ENCODE measurements at regions of chr4 and their contacts with region 1.

Region 1: DNA sequence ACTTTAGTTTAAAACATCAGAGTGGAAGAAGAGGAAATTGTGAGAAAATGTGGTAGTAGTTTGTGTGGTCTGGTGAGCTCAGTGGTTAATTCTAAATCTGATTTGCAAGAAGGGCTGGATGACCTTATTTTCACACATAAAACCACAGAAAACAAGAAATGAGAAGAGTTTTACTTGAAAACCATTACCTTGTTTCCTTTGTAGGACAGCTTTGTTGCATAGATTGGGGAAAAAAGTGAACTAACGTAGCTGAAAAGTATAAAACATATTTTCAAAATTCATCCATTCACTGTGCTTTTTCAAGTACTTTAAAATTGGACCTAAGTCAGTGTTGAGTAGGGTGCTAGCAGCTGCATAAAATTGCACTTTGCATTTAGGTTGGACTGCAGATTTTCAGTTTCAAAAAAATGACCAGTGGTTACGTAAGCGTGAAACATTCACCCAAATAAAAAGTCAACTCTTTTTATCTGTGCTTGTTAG is 211.3 kb downstream of the ARHGAP10 start:
- DNase-seq: no peak
- ATAC-seq: no peak
- H3K4me3 ChIP-seq: no peak overlapping the region
- H3K27ac ChIP-seq: no peak overlapping the region
- H3K4me1 ChIP-seq: peaks cover 0 to 34% of the 10 kb centered on the region in 2 donors
- H3K27me3 ChIP-seq: no peaks in the 10 kb centered on the region
- CTCF ChIP-seq: no peak
- POLR2A ChIP-seq: no peak

Region 2: GRCh38 chr4:147879676-147880075 is 63.5 kb before region 1 on chr4:
- in situ Hi-C with region 1: loop called in 1 of 4 experiments (anchors 10 kb)
- intact Hi-C with region 1: no loop called
- DNase-seq: no peak
- ATAC-seq: no peak
- H3K4me3 ChIP-seq: no peak overlapping the region
- H3K27ac ChIP-seq: no peak overlapping the region
- H3K4me1 ChIP-seq: no peaks in the 10 kb centered on the region
- H3K27me3 ChIP-seq: no peaks in the 10 kb centered on the region
- CTCF ChIP-seq: no peak
- POLR2A ChIP-seq: no peak

Region 3: DNA sequence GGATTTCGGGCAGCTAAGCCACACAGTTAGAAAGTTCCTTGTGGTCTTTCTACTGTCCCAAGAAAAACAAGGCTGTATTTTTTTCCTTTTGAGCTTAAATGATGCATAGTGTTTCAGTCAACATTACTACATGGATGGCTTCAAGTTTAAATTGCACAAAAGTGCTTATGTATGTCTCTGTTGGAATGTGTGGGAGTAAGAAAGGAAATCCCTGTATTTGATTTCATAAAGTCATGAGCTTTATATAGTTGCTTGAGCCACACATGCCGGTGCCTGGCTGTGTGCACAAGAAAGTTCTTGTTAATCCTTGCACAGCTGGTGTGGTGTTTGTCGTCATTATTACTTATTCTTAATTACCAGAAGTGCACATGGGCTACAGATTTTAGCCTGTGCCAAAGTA is 50.9 kb after region 1 on chr4:
- in situ Hi-C with region 1: no loop called
- intact Hi-C with region 1: no loop called
- DNase-seq: peak in 1 of 2 donors; percentile 27
- ATAC-seq: peak; percentile 68 to 93
- H3K4me3 ChIP-seq: no peak overlapping the region
- H3K27ac ChIP-seq: peak overlapping the region; percentile 5 to 49 (median 36)
- H3K4me1 ChIP-seq: peaks cover 33 to 39% of the 10 kb centered on the region in 2 donors
- H3K27me3 ChIP-seq: no peaks in the 10 kb centered on the region
- CTCF ChIP-seq: no peak
- POLR2A ChIP-seq: no peak

Measured in gastrocnemius medialis (tissue), 4 donors.